Activated CD4-positive, alpha-beta memory T cell treated with anti-CD3 and anti-CD28 coated beads for 36 hours (primary cell): ENCODE measurements at regions of chr15 and their contacts with region 1.

Region 1: DNA sequence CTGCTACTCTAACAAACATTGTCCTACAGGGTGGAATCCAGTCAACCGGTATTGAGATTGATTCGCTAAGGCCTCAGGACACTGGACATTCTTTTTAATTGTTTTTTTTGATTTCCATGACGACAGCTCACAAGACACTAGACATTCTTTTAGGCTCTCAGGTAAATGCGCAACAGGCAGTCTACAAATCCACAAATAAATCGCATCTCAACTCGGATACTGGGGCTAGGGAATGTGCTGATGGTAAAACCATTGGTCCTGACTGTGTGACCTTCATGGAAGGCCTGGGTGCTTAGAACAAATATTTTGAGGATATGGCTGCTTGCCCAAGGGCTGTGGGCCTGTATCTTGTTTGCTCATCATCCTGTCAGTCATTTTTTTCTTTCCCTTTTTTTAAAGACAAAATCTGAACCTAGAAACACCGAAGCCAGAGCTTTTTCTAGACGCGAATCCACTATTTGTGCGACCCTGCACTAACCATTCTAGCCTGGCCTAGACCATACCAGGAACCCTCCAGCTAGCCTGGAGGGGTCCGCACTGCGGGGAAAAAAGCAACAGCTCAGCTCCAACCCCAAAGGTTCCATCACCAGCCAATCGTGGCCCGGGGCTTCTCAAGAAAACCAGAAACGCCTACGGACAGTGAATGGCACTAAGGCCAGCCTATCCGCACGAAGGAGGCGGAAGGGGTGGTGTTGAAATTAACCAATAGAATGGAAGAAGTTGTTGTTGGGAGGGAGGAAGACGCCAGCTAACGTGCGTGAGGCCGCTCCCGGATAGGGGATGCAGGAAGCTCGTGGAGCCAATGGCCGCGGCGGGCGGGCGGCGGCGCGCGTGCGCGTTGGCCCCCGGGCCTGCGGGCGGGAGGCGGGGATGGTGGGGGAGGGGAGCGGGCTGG is 18.1 kb upstream of the CHD2 start:
- DNase-seq: peak; percentile 99
- H3K4me3 Mint-ChIP-seq: peak overlapping the region; percentile 96
- H3K27ac Mint-ChIP-seq: peak overlapping the region; percentile 97
- H3K4me1 Mint-ChIP-seq: peaks cover 43% of the 10 kb centered on the region
- H3K27me3 Mint-ChIP-seq: no peaks in the 10 kb centered on the region

Region 2: GRCh38 chr15:92797168-92797951 is 84.7 kb before region 1 on chr15:
- CTCF ChIA-PET with region 1: interaction called, 20 read pairs
- POLR2A ChIA-PET with region 1: interaction called, 3 read pairs
- intact Hi-C with region 1: no loop called
- DNase-seq: no peak
- H3K4me3 Mint-ChIP-seq: no peak overlapping the region
- H3K27ac Mint-ChIP-seq: peak overlapping the region; percentile 69
- H3K4me1 Mint-ChIP-seq: peaks cover 9% of the 10 kb centered on the region
- H3K27me3 Mint-ChIP-seq: no peaks in the 10 kb centered on the region

Region 3: DNA sequence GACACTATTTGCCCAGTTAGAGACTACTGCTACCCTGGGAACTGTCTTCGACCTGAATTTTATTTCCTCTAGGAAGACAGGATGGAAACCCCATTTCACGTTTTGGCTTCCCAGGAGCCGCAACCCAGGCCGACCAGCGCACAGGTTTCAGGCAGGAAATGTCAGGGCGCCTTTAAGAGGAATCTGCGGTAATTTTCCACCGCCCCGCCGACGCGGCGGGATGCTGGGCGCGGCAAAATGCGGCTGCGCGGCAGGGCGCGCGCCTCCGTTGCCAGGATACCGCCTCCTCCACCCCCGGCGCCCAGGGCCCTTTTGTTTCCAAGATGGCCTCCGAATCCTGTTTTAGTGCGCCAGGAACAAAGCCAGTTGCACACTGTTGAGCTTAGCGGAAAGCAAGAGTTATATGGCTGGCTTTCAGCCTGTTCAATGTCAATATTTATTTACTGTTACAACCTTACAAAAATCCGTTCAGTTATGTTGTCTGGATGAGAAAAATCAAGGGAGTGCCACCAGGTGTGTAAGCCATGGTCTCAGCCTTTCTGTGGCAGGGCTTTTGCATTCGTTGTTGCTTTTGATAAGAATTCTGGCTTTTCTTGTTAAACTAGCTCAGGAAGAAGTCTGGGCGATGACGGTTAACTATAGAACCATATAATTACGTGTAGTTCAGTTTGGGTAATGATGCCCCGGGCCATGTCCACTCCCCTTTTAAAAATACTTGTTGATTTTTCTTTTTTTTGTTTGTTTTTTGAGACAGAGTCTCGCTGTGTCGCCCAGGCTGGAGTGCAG is 61.6 kb before region 1 on chr15:
- CTCF ChIA-PET with region 1: interaction called, 5 read pairs
- POLR2A ChIA-PET with region 1: interaction called, 135 read pairs
- intact Hi-C with region 1: loop called (anchors 1 kb)
- DNase-seq: peak; percentile 92
- H3K4me3 Mint-ChIP-seq: peak overlapping the region; percentile 83
- H3K27ac Mint-ChIP-seq: peak overlapping the region; percentile 83
- H3K4me1 Mint-ChIP-seq: peaks cover 59% of the 10 kb centered on the region
- H3K27me3 Mint-ChIP-seq: no peaks in the 10 kb centered on the region

Region 4: GRCh38 chr15:92845126-92845508 is 36.9 kb before region 1 on chr15:
- CTCF ChIA-PET with region 1: interaction called, 4 read pairs
- POLR2A ChIA-PET with region 1: interaction called, 27 read pairs
- intact Hi-C with region 1: loop called (anchors 1 kb)
- DNase-seq: no peak
- H3K4me3 Mint-ChIP-seq: peak overlapping the region; percentile 57
- H3K27ac Mint-ChIP-seq: peak overlapping the region; percentile 89
- H3K4me1 Mint-ChIP-seq: peaks cover 70% of the 10 kb centered on the region
- H3K27me3 Mint-ChIP-seq: no peaks in the 10 kb centered on the region

Region 5: GRCh38 chr15:92903941-92904831 is 22.1 kb after region 1 on chr15:
- CTCF ChIA-PET with region 1: interaction called, 69 read pairs
- POLR2A ChIA-PET with region 1: interaction called, 733 read pairs
- intact Hi-C with region 1: loop called (anchors 1 kb)
- DNase-seq: peak; percentile 100
- H3K4me3 Mint-ChIP-seq: peak overlapping the region; percentile 97
- H3K27ac Mint-ChIP-seq: peak overlapping the region; percentile 100
- H3K4me1 Mint-ChIP-seq: peaks cover 55% of the 10 kb centered on the region
- H3K27me3 Mint-ChIP-seq: peaks cover 3% of the 10 kb centered on the region